ENCODE measurements at regions of chr11 and their contacts with region 1.

Region 1: GRCh38 chr11:2892215-2893020 is 6.8 kb upstream of the CDKN1C start:
- DNase-seq: no peak
- ATAC-seq: peak; percentile 2 to 65 (median 46)
- H3K4me3 ChIP-seq: peak overlapping the region; percentile 52
- H3K27ac ChIP-seq: no peak overlapping the region
- H3K4me1 ChIP-seq: no peaks in the 10 kb centered on the region
- H3K27me3 ChIP-seq: no peaks in the 10 kb centered on the region
- CTCF ChIP-seq: peak; percentile 80

Region 2: GRCh38 chr11:2420502-2421225 is 471.8 kb before region 1 on chr11:
- intact Hi-C with region 1: loop called in 1 of 2 experiments (anchors 10 kb)
- DNase-seq: peak; percentile 72 to 86
- ATAC-seq: peak; percentile 92 to 98 (median 96)
- H3K4me3 ChIP-seq: no peak overlapping the region
- H3K27ac ChIP-seq: no peak overlapping the region
- H3K4me1 ChIP-seq: no peaks in the 10 kb centered on the region
- H3K27me3 ChIP-seq: peaks cover 0 to 6% (median 0%) of the 10 kb centered on the region in 3 donors
- CTCF ChIP-seq: peak; percentile 94

Region 3: DNA sequence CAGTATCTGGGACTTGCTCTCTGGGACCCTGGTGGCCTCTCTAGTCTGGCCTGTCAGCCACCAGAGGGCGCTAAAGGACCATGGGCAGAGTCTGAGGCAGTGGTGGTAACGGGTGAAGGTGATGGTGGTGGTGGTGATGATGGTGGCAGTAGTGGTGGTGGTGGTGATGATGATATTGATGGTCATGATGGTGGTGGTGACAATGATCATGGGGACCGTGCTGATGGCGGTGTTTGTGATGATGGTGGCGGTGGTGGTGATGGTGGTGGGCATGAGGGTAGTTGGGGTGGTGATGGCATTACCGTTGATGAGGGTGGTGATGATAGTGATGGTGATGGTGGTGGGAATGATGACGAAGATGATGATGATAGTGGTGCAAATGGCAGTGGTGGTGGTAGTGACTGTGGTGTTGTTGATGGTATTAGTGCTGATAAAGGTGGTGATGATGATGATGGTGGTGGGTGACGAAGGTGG is 464.1 kb before region 1 on chr11:
- intact Hi-C with region 1: loop called (anchors 1 to 10 kb)
- DNase-seq: peak; percentile 66 to 83
- ATAC-seq: peak; percentile 69 to 77 (median 72)
- H3K4me3 ChIP-seq: no peak overlapping the region
- H3K27ac ChIP-seq: no peak overlapping the region
- H3K4me1 ChIP-seq: no peaks in the 10 kb centered on the region
- H3K27me3 ChIP-seq: peaks cover 0 to 2% (median 0%) of the 10 kb centered on the region in 3 donors
- CTCF ChIP-seq: peak; percentile 65

Region 4: DNA sequence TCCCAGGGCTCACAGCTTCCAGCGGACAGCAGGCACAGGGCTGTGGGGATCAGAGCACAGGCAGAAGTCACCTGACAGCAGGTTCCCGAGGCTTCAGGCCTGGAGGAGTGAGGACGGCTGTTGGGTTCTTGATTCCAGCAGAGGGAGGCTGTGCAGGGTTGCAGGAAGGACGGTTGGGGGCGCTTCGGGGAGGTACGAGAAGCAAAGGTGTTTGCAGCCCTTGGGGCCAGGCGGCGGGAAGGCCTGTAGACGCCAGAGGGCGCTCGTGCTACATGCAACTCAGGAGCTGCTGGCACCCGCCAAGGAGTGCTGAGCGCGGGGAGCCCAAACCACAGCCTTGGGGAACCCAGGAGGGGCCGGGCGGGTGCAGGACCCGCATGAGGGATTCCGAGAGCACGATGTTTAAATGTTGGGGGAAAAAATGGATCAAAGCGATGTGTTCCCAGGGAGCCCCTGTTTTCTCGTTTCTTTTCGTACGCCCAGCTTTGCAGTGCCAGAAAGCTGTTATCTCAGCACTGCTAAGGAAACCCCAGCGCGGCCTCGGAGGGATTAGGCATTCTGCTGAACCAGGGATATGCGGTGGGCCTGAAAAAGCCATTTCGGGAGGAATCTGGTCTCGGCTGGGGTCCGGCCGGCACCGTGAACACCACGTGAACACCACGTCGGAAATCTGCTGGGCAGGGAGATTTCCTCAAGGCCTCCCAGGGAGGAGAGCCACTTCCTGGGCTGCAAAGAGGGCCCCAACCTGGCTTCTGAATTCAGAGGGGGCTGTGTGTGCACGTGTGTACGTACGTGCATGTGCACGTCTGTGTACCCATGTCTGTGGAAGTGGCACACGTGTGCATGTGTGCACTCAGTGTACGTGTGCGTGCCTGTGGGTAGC is 359.5 kb before region 1 on chr11:
- intact Hi-C with region 1: loop called (anchors 1 kb)
- DNase-seq: peak; percentile 88 to 95
- ATAC-seq: peak; percentile 85 to 94 (median 89)
- H3K4me3 ChIP-seq: peak overlapping the region; percentile 53
- H3K27ac ChIP-seq: no peak overlapping the region
- H3K4me1 ChIP-seq: peaks cover 8% of the 10 kb centered on the region
- H3K27me3 ChIP-seq: peaks cover 0 to 2% (median 0%) of the 10 kb centered on the region in 3 donors
- CTCF ChIP-seq: peak; percentile 99